ENCODE measurements at regions of chr12 and their contacts with region 1.

Region 1: DNA sequence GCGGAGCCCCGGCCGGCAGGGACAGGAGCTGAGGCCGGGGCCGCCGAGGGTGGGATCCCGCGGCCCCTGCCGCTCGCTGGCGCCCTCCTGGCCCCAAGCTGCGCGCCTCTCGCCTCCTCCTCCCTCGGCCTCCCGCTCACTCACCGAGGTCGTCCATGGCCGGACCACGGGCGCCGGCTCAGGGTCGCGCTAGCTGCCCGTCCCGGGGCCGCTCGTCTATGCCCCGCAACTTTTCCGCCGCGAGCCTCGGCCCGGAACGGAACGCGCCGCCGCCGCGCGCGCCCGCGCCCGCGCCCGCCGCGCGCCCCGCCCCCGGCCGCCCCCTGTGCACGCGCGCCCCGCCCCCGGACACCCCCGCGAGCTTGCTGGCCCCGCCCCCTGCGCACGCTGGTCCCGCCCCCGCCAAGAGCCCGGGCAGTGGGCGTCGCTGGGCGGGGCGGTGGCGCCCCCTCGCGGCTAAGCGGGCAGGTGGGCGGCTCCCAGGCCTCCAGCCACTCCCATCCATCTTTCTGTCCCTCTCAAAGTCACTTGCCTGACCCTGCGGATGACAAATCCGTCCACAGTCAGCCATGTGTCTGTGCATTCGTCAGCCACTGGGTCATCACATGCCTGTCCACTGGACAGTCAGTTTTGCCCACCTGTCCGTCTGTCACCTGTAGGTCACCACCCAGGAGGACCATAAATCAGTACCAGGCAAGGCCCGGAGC is at the start of gene PXN:
- DNase-seq: peak; percentile 95
- ATAC-seq: peak; percentile 79
- H3K4me3 Mint-ChIP-seq: peak within 1 kb of the TSS; percentile 95
- H3K27ac Mint-ChIP-seq: peak within 1 kb of the TSS; percentile 85
- H3K4me1 Mint-ChIP-seq: peaks cover 46% of the 10 kb centered on the region
- H3K27me3 Mint-ChIP-seq: no peaks in the 10 kb centered on the region
- total RNA-seq, gene PXN: 74.5 to 104 TPM

Region 2: GRCh38 chr12:120194534-120195395 is 70.9 kb before region 1 on chr12 and contains the start of gene GCN1:
- CTCF ChIA-PET with region 1: interaction called, 3 read pairs
- POLR2A ChIA-PET with region 1: interaction called, 46 read pairs
- intact Hi-C with region 1: no loop called
- DNase-seq: peak; percentile 93
- ATAC-seq: peak; percentile 81
- H3K4me3 Mint-ChIP-seq: peak within 1 kb of the TSS; percentile 98
- H3K27ac Mint-ChIP-seq: peak within 1 kb of the TSS; percentile 92
- H3K4me1 Mint-ChIP-seq: peaks cover 45% of the 10 kb centered on the region
- H3K27me3 Mint-ChIP-seq: no peaks in the 10 kb centered on the region
- total RNA-seq, gene GCN1: 125 to 139 TPM

Region 3: DNA sequence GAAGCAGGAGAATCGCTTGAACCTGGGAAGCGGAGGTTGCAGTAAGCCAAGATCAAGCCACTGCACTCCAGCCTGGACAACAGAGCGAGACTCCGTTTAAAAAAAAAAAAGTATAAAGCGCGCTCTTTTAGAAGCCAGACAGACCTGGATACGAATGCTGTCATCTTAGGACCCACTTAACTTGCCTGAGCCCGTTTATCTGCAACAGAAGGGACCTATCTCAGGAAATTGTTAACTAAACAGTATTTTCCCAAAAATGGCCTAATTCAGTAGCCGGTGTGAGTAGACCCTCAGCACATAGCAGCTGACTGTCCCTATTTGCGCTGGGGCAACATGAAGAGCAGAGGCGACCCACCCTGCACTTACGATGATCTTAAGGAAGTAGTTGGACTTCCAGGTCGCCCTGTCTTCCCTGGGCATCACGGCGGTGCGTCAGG is 65.2 kb before region 1 on chr12:
- CTCF ChIA-PET with region 1: interaction called, 22 read pairs
- POLR2A ChIA-PET with region 1: interaction called, 46 read pairs
- intact Hi-C with region 1: loop called (anchors 1 to 2 kb)
- DNase-seq: no peak
- ATAC-seq: no peak
- H3K4me3 Mint-ChIP-seq: peak overlapping the region; percentile 98
- H3K27ac Mint-ChIP-seq: peak overlapping the region; percentile 99
- H3K4me1 Mint-ChIP-seq: peaks cover 39% of the 10 kb centered on the region
- H3K27me3 Mint-ChIP-seq: no peaks in the 10 kb centered on the region

Region 4: GRCh38 chr12:120213758-120214157 is 51.9 kb before region 1 on chr12:
- CTCF ChIA-PET with region 1: no interaction called
- POLR2A ChIA-PET with region 1: no interaction called
- intact Hi-C with region 1: no loop called
- DNase-seq: no peak
- ATAC-seq: no peak
- H3K4me3 Mint-ChIP-seq: no peak overlapping the region
- H3K27ac Mint-ChIP-seq: no peak overlapping the region
- H3K4me1 Mint-ChIP-seq: no peaks in the 10 kb centered on the region
- H3K27me3 Mint-ChIP-seq: no peaks in the 10 kb centered on the region

Region 5: GRCh38 chr12:120234643-120235368 is 30.8 kb before region 1 on chr12:
- CTCF ChIA-PET with region 1: interaction called, 518 read pairs
- POLR2A ChIA-PET with region 1: interaction called, 61 read pairs
- intact Hi-C with region 1: no loop called
- DNase-seq: no peak
- ATAC-seq: no peak
- H3K4me3 Mint-ChIP-seq: no peak overlapping the region
- H3K27ac Mint-ChIP-seq: peak overlapping the region; percentile 65
- H3K4me1 Mint-ChIP-seq: peaks cover 85% of the 10 kb centered on the region
- H3K27me3 Mint-ChIP-seq: no peaks in the 10 kb centered on the region

Region 6: DNA sequence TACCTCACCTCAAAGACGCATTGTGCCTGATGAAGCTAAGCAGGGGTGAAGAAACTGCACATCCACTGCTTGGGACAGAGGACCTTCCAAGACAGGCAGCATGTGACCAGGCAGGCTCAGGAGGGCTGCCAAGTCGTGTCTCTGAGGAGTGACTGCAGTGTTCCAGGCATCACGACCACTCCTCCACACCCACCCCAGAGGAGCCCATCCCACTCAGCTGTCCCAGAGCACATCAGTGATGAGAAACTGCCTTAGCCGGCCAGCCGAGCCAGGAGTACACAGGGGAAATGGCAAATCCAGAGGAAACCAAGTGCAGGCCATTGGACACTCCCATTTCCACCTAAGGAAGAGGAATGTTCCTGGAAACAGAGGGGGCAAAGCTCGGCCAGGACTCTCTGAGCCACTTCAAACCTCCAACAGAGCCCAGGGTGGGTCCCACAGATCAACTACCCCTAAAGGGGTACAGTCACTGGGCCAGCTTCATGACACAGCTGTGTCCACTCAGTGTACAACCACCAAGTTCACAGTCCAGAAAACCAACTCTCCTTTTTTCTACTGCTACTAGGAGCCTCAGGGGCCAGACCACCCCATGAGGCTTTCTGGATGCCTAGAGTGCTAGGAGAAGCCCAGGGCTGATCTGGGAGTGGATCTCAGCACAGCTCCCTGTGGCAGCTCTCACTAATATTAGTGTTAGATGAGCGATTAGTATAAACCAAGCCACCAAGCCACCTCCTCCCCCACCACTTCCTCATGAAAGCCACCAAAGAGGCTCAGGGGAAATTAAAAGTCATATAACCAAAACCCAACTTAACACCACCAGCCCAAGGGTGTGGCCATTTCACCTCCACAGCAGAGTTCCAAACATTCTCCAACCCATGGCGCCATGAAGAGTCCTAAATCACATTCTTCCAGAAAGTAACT is 15.5 kb before region 1 on chr12:
- CTCF ChIA-PET with region 1: interaction called, 72 read pairs
- POLR2A ChIA-PET with region 1: interaction called, 4 read pairs
- intact Hi-C with region 1: loop called (anchors 1 kb)
- DNase-seq: peak; percentile 51
- ATAC-seq: peak; percentile 10
- H3K4me3 Mint-ChIP-seq: peak overlapping the region; percentile 10
- H3K27ac Mint-ChIP-seq: peak overlapping the region; percentile 74
- H3K4me1 Mint-ChIP-seq: peaks cover 80% of the 10 kb centered on the region
- H3K27me3 Mint-ChIP-seq: no peaks in the 10 kb centered on the region

Measured in activated CD4-positive, alpha-beta T cell treated with anti-CD3 and anti-CD28 coated beads for 36 hours (primary cell).